HepG2 (cell line): ENCODE measurements at regions of chr3 and their contacts with region 1.

Region 1: GRCh38 chr3:169149349-169149890 is 514.1 kb downstream of the MECOM start:
- DNase-seq: peak; percentile 45
- ATAC-seq: peak; percentile 99
- H3K4me3 ChIP-seq: peak overlapping the region in 1 of 3 experiments; percentile 23; a peak in 1 of 6 replicates
- H3K27ac ChIP-seq: no peak overlapping the region
- H3K4me1 ChIP-seq: peaks cover 17% of the 10 kb centered on the region
- H3K27me3 ChIP-seq: peaks cover 1 to 33% of the 10 kb centered on the region in 2 experiments; a peak in 4 of 5 replicates
- CTCF ChIP-seq: peak; percentile 87
- EP300 ChIP-seq: no peak
- POLR2A ChIP-seq: no peak
- RAD21 ChIP-seq: peak; percentile 87

Region 2: DNA sequence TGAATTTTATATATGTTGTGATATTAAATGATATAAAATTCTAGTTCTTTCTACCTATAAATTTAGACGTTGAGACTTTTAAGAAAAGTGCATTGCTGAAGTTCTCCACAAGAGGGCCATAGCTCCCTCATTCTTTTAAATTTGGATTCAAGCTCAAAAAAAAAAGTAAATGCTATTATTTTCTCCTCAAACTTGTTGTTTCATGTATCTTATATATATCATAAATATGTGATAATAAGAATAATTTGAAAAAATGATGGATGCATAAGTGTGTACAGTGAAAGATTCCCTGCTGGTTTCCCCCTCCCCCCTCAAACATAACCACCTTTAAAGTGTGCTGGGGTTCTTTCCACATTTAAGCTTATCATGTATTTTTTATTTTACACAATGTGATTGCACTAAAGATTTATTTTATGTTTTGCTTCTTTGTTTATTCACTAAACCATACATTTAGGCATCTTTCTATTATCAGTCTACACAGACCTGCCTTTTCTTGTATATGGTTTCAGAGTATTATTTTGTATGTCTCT is 284.3 kb before region 1 on chr3:
- CTCF ChIA-PET with region 1: no interaction called
- POLR2A ChIA-PET with region 1: no interaction called
- in situ Hi-C with region 1: no loop called
- intact Hi-C with region 1: loop called (anchors 10 kb)
- DNase-seq: no peak
- ATAC-seq: no peak
- H3K4me3 ChIP-seq: no peak overlapping the region
- H3K27ac ChIP-seq: no peak overlapping the region
- H3K4me1 ChIP-seq: peaks cover 87% of the 10 kb centered on the region
- H3K27me3 ChIP-seq: no peaks in the 10 kb centered on the region
- CTCF ChIP-seq: peak; percentile 48; the same call in 1 of the 2 replicates
- EP300 ChIP-seq: no peak
- POLR2A ChIP-seq: no peak
- RAD21 ChIP-seq: no peak

Region 3: DNA sequence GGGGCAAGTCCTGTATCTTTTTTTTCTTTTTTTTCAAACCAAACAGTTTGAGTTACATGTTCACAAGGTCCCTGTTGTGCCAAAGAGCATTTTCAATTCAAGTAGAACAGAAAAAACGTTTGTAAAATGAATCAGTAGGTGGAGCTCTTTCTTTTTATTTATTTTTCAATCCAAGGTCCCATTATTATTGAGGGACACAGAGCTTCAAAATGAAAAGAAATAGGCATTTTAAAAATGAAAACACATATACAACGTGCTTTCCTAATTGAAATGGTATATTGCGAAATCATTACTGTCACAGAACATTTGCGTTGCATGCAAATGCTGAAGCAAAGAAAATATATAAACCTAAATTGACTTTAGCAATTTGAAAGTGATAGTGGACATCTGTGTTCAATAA is 196.9 kb before region 1 on chr3:
- CTCF ChIA-PET with region 1: no interaction called
- POLR2A ChIA-PET with region 1: no interaction called
- in situ Hi-C with region 1: no loop called
- intact Hi-C with region 1: loop called (anchors 10 kb)
- DNase-seq: peak; percentile 5
- ATAC-seq: peak; percentile 51
- H3K4me3 ChIP-seq: no peak overlapping the region
- H3K27ac ChIP-seq: no peak overlapping the region
- H3K4me1 ChIP-seq: no peaks in the 10 kb centered on the region
- H3K27me3 ChIP-seq: no peaks in the 10 kb centered on the region
- CTCF ChIP-seq: peak; percentile 40; the same call in 1 of the 2 replicates
- EP300 ChIP-seq: no peak
- POLR2A ChIP-seq: no peak
- RAD21 ChIP-seq: no peak

Region 4: GRCh38 chr3:169295126-169295525 is 145.7 kb after region 1 on chr3:
- CTCF ChIA-PET with region 1: interaction called, 3 read pairs
- POLR2A ChIA-PET with region 1: no interaction called
- in situ Hi-C with region 1: no loop called
- intact Hi-C with region 1: loop called (anchors 10 kb)
- DNase-seq: no peak
- ATAC-seq: no peak
- H3K4me3 ChIP-seq: no peak overlapping the region
- H3K27ac ChIP-seq: no peak overlapping the region
- H3K4me1 ChIP-seq: no peaks in the 10 kb centered on the region
- H3K27me3 ChIP-seq: no peaks in the 10 kb centered on the region
- CTCF ChIP-seq: 0 out of 2 replicates have a peak, but pooled peaks have one; percentile 11
- EP300 ChIP-seq: no peak
- POLR2A ChIP-seq: no peak
- RAD21 ChIP-seq: no peak

Region 5: GRCh38 chr3:169744366-169745054 is 595.1 kb after region 1 on chr3:
- CTCF ChIA-PET with region 1: interaction called, 5 read pairs
- POLR2A ChIA-PET with region 1: no interaction called
- in situ Hi-C with region 1: no loop called
- intact Hi-C with region 1: loop called (anchors 1 kb)
- DNase-seq: no peak
- ATAC-seq: no peak
- H3K4me3 ChIP-seq: no peak overlapping the region
- H3K27ac ChIP-seq: no peak overlapping the region
- H3K4me1 ChIP-seq: no peaks in the 10 kb centered on the region
- H3K27me3 ChIP-seq: peaks cover 0 to 5% of the 10 kb centered on the region in 2 experiments; a peak in 2 of 5 replicates
- CTCF ChIP-seq: peak; percentile 40
- EP300 ChIP-seq: no peak
- POLR2A ChIP-seq: no peak
- RAD21 ChIP-seq: no peak